Right ventricle myocardium superior (tissue), 1 donor: ENCODE measurements at regions of chr11 and their contacts with region 1.

Region 1: GRCh38 chr11:47642099-47642855 is at the start of gene MTCH2:
- DNase-seq: peak; percentile 96
- ATAC-seq: peak; percentile 98
- total RNA-seq, gene MTCH2: 111 TPM

Region 2: GRCh38 chr11:47593934-47594855 is 48.1 kb before region 1 on chr11 and contains the start of gene C1QTNF4:
- intact Hi-C with region 1: no loop called
- DNase-seq: no peak
- ATAC-seq: no peak
- total RNA-seq, gene C1QTNF4: 0.48 TPM

Region 3: DNA sequence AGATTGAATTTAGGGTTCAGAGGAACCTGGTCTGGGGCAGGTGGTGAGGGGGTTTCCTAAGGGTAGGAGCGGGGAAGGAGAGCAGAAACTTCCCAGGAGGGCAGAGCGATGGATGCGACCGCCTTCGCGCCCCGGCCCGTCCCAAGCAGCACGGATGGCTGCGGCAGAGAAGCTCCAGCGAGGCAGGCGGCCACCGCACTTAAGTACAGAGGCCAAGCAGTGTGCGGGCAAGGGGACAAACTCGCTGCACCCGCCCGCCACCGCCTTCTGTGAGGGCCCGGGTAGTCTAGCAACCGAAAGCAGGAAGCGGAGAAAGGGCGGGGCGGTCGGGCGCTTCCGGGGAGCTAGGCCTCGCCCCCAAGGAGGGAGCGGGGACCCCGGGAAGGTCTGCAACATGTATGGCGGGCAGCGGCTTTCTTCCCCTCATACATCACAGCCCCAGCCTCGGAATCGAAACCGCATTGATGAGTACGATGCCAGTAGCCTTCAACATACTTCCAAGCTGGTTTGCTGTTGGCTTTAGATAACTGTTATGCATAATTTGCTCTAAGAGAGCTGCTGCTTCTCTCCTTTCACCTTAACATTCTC is 72.9 kb after region 1 on chr11 and contains the start of gene AGBL2:
- intact Hi-C with region 1: loop called (anchors 10 kb)
- DNase-seq: peak; percentile 88
- ATAC-seq: peak; percentile 97
- total RNA-seq, gene AGBL2: 0.35 TPM

Region 4: GRCh38 chr11:47819743-47820142 is 177.5 kb after region 1 on chr11:
- intact Hi-C with region 1: no loop called
- DNase-seq: no peak
- ATAC-seq: no peak

Region 5: GRCh38 chr11:47837292-47837691 is 195.0 kb after region 1 on chr11:
- intact Hi-C with region 1: loop called (anchors 10 kb)
- DNase-seq: no peak
- ATAC-seq: no peak